HEK293T (cell line): ENCODE measurements at regions of chr11 and their contacts with region 1.

Region 1: GRCh38 chr11:57493507-57494503 is 21.7 kb downstream of the SLC43A1 start:
- DNase-seq: peak; percentile 58

Region 2: GRCh38 chr11:57324886-57325734 is 168.7 kb before region 1 on chr11 and contains the start of gene TNKS1BP1:
- CTCF ChIA-PET with region 1: no interaction called
- POLR2A ChIA-PET with region 1: no interaction called
- DNase-seq: peak; percentile 96

Region 3: GRCh38 chr11:57482782-57483561 is 10.8 kb before region 1 on chr11:
- CTCF ChIA-PET with region 1: interaction called, 27 read pairs
- POLR2A ChIA-PET with region 1: no interaction called
- DNase-seq: no peak

Region 4: GRCh38 chr11:57508341-57509170 is 14.8 kb after region 1 on chr11:
- CTCF ChIA-PET with region 1: interaction called, 12 read pairs
- POLR2A ChIA-PET with region 1: interaction called, 29 read pairs
- DNase-seq: no peak

Region 5: DNA sequence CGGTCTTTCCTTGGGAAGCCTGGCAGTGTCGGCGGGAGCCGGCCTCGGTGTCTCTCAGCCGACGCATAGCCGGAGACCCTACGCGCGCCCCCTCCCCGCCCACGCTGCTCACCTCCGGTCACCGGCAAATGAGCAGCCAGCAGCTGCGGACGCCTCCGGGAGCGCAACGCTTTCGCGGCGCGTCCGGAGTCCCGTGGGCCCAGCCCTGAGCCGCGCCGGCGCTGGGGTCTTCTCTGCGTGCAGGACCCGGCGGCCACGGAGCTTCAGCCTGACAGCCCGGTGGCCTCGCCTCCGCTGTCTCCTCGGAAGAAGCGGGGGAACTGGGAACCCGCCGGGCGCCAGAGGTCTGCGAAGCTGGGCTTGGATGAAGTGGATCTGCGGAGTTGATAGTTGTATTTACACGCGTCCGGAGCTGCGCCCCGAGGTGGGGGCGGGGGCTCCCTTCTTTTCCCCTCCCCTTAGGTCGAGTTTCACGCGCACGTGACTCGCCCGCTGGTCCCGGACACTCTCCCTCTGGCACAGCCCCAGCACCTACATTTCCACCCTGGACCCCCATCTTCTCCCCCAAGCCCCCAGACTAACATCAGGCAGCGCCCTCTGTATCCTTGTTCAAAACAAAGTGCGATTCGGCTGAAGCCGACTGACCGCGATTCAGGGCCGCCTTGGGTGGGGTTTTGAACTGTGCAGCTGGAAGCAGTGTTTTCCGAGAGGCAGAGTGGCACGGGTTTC is 21.7 kb after region 1 on chr11 and contains the start of gene SLC43A1:
- CTCF ChIA-PET with region 1: interaction called, 44 read pairs
- POLR2A ChIA-PET with region 1: interaction called, 29 read pairs
- DNase-seq: peak; percentile 55

Region 6: DNA sequence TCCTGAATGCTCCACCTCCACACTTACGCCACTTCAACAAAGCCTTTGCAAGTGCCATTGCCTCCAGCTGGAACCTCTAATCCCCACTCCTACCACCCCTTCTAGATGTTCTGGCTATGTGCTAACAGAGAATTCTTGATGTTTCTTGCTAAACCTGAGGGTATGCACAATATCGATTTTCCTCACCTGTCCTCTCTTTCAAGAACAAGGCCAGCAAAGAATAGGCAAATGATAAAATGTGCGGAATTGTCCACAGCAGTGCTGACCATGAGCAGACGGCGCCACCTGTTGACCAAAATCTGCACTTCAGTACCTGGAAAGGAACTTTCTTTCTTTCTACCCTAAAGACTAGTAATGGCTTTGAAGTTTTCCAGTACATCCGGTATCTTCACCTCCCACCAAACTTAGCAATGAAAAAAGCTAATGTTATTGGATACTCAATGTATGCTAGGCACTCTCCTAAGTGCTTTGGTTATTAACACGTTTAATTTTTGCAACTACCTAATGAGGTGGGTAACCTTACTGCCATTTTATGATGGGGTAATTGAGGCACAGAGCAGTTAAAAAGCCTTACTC is 33.3 kb after region 1 on chr11:
- CTCF ChIA-PET with region 1: interaction called, 145 read pairs
- POLR2A ChIA-PET with region 1: interaction called, 17 read pairs
- DNase-seq: peak; percentile 57

Region 7: DNA sequence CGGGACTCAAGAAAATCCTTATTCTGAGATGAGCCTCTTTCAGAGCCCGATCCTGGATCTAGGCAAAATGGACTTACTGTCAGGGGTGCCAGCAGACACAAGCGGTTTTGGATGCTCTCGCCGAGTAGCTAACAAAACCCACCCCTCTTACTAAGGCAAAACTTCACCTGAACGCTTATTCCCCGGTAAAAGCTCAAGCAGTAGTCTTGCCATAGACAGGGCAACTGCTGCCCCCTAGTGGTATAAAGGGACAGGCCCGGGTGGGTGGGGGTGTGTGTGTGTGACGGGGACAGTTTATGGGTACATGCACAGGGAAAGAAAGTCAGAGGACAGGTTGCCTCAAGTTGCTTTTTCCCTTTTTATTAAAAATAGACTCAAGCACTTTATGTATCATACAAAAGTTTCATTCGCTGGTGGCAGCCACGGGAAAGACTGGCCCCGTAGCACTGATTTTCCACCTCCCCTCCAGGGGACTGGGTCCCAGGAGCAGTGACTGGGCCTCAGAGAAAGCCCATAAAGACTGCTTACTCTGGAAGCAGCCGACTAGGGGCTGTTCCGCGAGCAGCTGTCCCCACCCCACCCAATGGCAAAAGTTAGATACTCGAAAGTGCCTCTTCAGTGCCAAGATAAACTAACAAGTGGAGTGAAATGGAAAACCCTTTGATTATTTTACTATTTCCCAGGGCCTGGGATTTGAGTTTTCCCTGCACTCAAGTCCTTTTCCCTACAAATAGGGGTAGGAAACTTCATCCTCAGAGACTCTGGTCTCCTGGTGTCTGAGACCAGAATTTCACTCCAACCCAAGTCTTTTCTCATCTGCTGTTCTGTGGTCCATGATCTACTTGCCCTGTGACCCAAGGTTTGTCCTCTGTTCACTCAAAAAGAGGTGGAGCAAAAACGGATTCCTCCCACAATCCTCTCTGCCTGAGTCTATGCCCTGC is 151.2 kb after region 1 on chr11:
- CTCF ChIA-PET with region 1: interaction called, 15 read pairs
- POLR2A ChIA-PET with region 1: interaction called, 4 read pairs
- DNase-seq: peak; percentile 78

Region 8: GRCh38 chr11:57703341-57703740 is 209.5 kb after region 1 on chr11:
- CTCF ChIA-PET with region 1: no interaction called
- POLR2A ChIA-PET with region 1: no interaction called
- DNase-seq: no peak